Activated CD4-positive, alpha-beta memory T cell treated with anti-CD3 and anti-CD28 coated beads for 36 hours (primary cell): ENCODE measurements at regions of chr11 and their contacts with region 1.

Region 1: DNA sequence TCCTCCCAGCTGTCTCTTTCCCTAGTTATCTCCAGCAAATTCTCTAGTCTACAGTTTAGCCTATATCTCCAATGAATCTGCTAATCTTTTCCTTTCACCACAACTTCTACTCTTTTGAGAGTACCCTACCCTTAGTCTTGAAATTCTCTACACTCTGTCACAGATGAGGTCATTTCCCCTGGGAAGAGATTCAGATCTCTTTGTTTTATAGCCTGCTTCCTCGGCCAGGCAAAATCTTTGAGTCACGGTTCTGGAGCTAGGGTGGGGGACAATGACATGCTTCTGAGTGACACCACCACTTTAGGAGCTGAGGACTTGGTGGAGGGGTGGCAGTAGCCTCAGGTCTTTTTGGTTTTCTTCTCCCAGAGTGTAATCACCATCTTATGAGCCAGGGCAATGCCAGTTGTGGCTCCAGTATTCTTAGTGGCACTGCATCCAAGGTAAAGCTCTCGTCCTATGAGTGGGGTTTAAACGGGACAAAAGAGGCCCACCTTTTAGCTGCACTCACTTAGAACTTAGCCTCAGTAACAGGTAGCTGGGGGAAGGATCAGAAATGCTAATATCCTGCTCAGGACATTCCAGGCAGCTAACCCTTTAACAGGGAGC is 98.5 kb upstream of the RRM1 start:
- DNase-seq: no peak
- H3K4me3 Mint-ChIP-seq: no peak overlapping the region
- H3K27ac Mint-ChIP-seq: no peak overlapping the region
- H3K4me1 Mint-ChIP-seq: peaks cover 33% of the 10 kb centered on the region
- H3K27me3 Mint-ChIP-seq: no peaks in the 10 kb centered on the region

Region 2: DNA sequence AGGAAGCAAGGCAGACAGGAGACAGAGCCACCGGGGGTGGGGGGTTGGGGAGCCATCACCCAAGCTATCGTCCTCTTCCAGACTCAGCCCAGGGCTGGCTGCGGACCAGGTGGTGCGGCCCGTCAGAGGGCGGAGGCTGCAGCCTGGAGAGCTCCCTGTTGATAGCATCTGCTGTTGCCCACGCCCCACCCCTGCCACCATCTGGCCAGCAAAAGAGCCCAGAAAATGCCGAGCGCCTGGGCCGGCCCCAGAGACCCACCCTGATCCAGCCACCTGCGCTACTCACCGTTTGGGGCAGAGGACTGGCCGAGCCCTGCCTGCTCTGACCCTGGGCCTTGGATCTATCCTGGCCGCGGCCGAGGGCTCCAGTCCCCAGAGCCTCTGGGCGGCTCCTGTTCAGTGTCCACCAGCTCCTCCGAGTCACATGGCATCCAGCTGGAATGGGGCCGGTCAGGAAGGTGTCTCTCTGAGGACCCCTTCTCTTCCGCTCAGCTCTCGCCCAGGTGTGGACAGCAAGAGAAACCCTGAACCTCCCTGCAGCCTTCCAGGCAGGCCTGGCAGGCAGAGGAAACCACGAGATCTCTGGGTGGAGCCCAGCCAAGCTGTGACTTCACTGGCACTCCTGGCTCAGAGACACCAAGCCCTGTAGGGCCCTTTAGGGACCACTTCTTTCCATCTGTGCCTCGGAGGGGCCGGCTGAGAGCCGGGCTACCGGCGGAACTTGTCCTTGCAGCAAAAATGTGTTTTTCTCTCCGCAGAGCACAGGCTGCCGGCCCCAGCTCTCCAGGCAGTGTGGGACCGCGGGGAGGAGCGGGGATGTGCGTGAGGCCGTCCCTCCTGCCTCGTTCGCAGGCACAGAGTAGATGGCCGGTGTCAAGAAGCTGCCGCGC is 764.0 kb before region 1 on chr11 and contains the start of gene MRGPRE:
- CTCF ChIA-PET with region 1: no interaction called
- POLR2A ChIA-PET with region 1: no interaction called
- intact Hi-C with region 1: no loop called
- DNase-seq: no peak
- H3K4me3 Mint-ChIP-seq: no peak within 1 kb of the TSS
- H3K27ac Mint-ChIP-seq: no peak within 1 kb of the TSS
- H3K4me1 Mint-ChIP-seq: no peaks in the 10 kb centered on the region
- H3K27me3 Mint-ChIP-seq: peaks cover 2% of the 10 kb centered on the region
- total RNA-seq, gene MRGPRE: not detected

Region 3: GRCh38 chr11:3865388-3866193 is 130.5 kb before region 1 on chr11:
- CTCF ChIA-PET with region 1: no interaction called
- POLR2A ChIA-PET with region 1: no interaction called
- intact Hi-C with region 1: no loop called
- DNase-seq: no peak
- H3K4me3 Mint-ChIP-seq: no peak overlapping the region
- H3K27ac Mint-ChIP-seq: peak overlapping the region; percentile 85
- H3K4me1 Mint-ChIP-seq: peaks cover 77% of the 10 kb centered on the region
- H3K27me3 Mint-ChIP-seq: no peaks in the 10 kb centered on the region

Region 4: GRCh38 chr11:4006946-4007680 is 11.1 kb after region 1 on chr11:
- CTCF ChIA-PET with region 1: no interaction called
- POLR2A ChIA-PET with region 1: no interaction called
- intact Hi-C with region 1: no loop called
- DNase-seq: no peak
- H3K4me3 Mint-ChIP-seq: no peak overlapping the region
- H3K27ac Mint-ChIP-seq: no peak overlapping the region
- H3K4me1 Mint-ChIP-seq: peaks cover 24% of the 10 kb centered on the region
- H3K27me3 Mint-ChIP-seq: no peaks in the 10 kb centered on the region

Region 5: DNA sequence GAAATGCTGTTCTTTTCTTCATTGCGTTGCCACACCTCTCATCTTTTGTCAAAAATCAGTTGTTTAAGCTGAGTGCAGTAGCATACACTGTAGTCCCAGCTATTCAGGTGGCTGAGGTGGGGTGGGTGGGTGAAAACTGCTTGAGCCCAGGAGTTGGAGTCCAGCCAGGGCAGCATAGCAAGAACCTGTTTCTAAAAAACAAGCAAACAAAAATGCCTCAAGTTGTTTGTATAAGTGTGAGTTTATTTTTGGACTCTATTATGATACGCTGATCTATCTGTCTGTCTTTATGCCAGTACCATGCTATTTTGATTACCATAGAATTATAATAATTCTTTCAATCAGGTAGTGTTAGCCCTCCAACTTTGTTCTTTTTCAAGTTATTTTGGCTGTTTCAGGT is 36.1 kb after region 1 on chr11:
- CTCF ChIA-PET with region 1: no interaction called
- POLR2A ChIA-PET with region 1: no interaction called
- intact Hi-C with region 1: loop called (anchors 5 kb)
- DNase-seq: no peak
- H3K4me3 Mint-ChIP-seq: no peak overlapping the region
- H3K27ac Mint-ChIP-seq: no peak overlapping the region
- H3K4me1 Mint-ChIP-seq: peaks cover 16% of the 10 kb centered on the region
- H3K27me3 Mint-ChIP-seq: no peaks in the 10 kb centered on the region

Region 6: GRCh38 chr11:4580124-4580523 is 584.1 kb after region 1 on chr11:
- CTCF ChIA-PET with region 1: no interaction called
- POLR2A ChIA-PET with region 1: no interaction called
- intact Hi-C with region 1: no loop called
- DNase-seq: no peak
- H3K4me3 Mint-ChIP-seq: no peak overlapping the region
- H3K27ac Mint-ChIP-seq: no peak overlapping the region
- H3K4me1 Mint-ChIP-seq: peaks cover 5% of the 10 kb centered on the region
- H3K27me3 Mint-ChIP-seq: peaks cover 9% of the 10 kb centered on the region